Activated naive CD4-positive, alpha-beta T cell treated with anti-CD3 and anti-CD28 coated beads for 36 hours (primary cell): ENCODE measurements at regions of chr4 and their contacts with region 1.

Region 1: GRCh38 chr4:98406819-98407218 is 145.6 kb downstream of the RAP1GDS1 start:
- DNase-seq: no peak
- H3K4me3 Mint-ChIP-seq: no peak overlapping the region
- H3K27ac Mint-ChIP-seq: no peak overlapping the region
- H3K4me1 Mint-ChIP-seq: peaks cover 6% of the 10 kb centered on the region
- H3K27me3 Mint-ChIP-seq: no peaks in the 10 kb centered on the region

Region 2: GRCh38 chr4:98377559-98377958 is 29.3 kb before region 1 on chr4:
- CTCF ChIA-PET with region 1: no interaction called
- intact Hi-C with region 1: loop called (anchors 2 kb)
- DNase-seq: no peak
- H3K4me3 Mint-ChIP-seq: no peak overlapping the region
- H3K27ac Mint-ChIP-seq: no peak overlapping the region
- H3K4me1 Mint-ChIP-seq: peaks cover 7% of the 10 kb centered on the region
- H3K27me3 Mint-ChIP-seq: no peaks in the 10 kb centered on the region

Region 3: DNA sequence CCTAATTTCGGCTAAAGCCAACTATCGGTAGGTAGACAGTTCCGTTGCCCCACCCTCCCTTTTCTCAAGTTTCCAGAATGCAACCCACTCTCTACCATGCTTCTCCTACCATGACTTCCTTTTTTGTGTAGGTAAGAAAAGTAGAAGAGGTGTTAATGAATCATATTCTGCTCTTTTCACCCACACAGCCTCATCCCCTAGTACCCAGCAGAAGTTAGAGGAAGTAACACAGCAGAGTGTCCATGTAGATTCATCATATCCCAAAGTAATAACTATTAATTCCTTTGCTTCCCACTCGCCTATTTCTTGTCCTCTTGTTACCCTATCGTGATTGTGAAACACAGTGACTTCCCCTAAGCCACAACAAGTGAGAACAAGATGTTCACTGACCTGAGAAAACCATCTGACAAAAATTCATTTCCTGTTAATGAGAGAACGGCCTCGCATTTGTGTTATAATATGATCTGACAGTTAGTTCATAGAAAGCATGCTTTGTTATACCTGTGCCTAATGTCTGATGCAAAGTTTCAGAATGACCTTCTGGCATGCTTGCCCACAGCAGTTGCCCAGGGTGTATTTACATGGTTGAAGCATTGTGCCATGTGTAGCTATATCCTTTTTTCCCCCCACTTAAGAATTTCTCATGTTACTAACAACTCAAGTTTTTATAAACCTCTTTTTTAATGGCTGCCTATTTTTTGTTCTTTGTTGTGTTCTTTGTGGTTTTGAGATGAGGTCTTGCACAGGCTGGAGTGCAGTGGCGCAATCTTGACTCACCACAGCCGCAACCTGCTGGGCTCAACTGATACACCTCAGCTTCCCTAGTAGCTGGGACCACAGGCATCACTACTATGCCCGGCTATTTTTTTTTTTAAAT is 39.9 kb after region 1 on chr4:
- CTCF ChIA-PET with region 1: no interaction called
- intact Hi-C with region 1: loop called (anchors 2 kb)
- DNase-seq: peak; percentile 72
- H3K4me3 Mint-ChIP-seq: peak overlapping the region; percentile 48
- H3K27ac Mint-ChIP-seq: peak overlapping the region; percentile 76
- H3K4me1 Mint-ChIP-seq: peaks cover 31% of the 10 kb centered on the region
- H3K27me3 Mint-ChIP-seq: no peaks in the 10 kb centered on the region

Region 4: DNA sequence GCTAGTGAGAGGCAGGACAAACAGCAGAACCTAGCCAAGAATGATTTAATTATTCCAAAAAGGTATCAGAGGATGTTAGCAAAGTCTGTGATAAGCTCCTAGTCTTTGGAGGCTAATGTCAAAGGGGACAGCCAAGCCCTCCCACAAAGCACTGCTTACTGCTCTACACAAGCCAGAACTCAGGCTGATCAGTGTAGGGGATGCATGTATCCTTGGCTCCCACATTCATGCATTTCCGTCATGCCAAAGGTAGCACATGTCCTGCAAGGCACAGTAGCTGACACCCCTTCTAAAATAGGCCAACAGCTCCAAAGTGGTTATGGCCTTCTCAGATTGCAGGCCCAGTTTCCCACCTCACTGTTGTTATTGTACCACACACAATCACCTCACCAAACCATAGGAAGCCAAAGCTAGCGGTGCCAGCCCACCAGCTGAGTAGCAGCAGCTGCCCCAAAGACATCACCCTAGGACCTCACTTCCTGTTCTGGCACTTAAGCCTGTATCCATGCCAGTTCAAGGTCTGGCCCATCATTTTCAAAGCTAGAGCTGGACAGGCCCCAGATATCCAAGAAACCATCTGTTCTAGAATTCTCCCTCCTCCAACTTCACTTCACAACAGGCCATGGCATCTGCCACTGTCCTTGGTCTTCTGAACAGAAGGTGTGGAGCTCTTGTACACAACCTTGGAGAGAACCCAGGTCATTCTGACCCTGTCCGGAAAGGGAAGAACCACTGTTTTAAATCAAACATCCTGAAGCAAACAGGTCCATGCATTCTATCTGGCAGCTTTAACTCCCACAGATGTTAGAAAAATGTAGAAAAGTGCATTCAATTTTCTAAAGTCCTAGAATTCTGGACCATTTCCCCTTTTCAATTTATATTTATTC is 210.8 kb after region 1 on chr4:
- CTCF ChIA-PET with region 1: no interaction called
- intact Hi-C with region 1: no loop called
- DNase-seq: no peak
- H3K4me3 Mint-ChIP-seq: no peak overlapping the region
- H3K27ac Mint-ChIP-seq: no peak overlapping the region
- H3K4me1 Mint-ChIP-seq: peaks cover 19% of the 10 kb centered on the region
- H3K27me3 Mint-ChIP-seq: no peaks in the 10 kb centered on the region